ENCODE measurements at regions of chr13 and their contacts with region 1.

Region 1: GRCh38 chr13:102141625-102142472 is 260.0 kb downstream of the FGF14 start:
- DNase-seq: no peak
- H3K4me3 ChIP-seq: no peak overlapping the region
- H3K27me3 ChIP-seq: no peaks in the 10 kb centered on the region
- CTCF ChIP-seq: peak; percentile 70

Region 2: GRCh38 chr13:102131246-102131645 is 10.6 kb before region 1 on chr13:
- CTCF ChIA-PET with region 1: interaction called, 19 read pairs
- POLR2A ChIA-PET with region 1: no interaction called
- DNase-seq: no peak
- H3K4me3 ChIP-seq: no peak overlapping the region
- H3K27me3 ChIP-seq: no peaks in the 10 kb centered on the region
- CTCF ChIP-seq: no peak

Region 3: GRCh38 chr13:102183509-102184182 is 41.8 kb after region 1 on chr13:
- CTCF ChIA-PET with region 1: no interaction called
- POLR2A ChIA-PET with region 1: no interaction called
- DNase-seq: no peak
- H3K4me3 ChIP-seq: no peak overlapping the region
- H3K27me3 ChIP-seq: no peaks in the 10 kb centered on the region
- CTCF ChIP-seq: no peak

Region 4: DNA sequence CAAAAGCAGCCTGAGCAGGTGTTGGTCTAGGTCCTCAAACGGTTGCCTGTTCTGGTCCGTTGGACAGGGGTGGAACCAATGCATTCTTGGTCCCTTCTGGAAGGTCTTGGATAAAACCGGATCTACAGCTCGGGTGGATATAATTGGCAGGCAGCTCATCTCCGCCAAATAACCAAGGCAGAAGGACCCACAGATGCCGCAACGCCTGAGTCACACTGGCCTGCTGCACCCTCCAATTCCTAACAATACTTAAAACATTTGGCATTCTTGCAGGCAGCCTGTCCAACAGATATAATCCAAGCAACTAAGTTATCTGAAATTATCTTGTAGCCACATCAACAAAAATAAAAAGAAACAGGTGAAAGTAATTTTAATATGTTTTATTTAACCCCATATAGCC is 319.0 kb after region 1 on chr13:
- CTCF ChIA-PET with region 1: interaction called, 50 read pairs
- POLR2A ChIA-PET with region 1: no interaction called
- DNase-seq: no peak
- H3K4me3 ChIP-seq: no peak overlapping the region
- H3K27me3 ChIP-seq: no peaks in the 10 kb centered on the region
- CTCF ChIP-seq: no peak

Region 5: GRCh38 chr13:102555917-102556553 is 414.2 kb after region 1 on chr13:
- CTCF ChIA-PET with region 1: interaction called, 22 read pairs
- POLR2A ChIA-PET with region 1: no interaction called
- DNase-seq: no peak
- H3K4me3 ChIP-seq: no peak overlapping the region
- H3K27me3 ChIP-seq: no peaks in the 10 kb centered on the region
- CTCF ChIP-seq: peak; percentile 53